ENCODE measurements at regions of chr2 and their contacts with region 1.

Region 1: DNA sequence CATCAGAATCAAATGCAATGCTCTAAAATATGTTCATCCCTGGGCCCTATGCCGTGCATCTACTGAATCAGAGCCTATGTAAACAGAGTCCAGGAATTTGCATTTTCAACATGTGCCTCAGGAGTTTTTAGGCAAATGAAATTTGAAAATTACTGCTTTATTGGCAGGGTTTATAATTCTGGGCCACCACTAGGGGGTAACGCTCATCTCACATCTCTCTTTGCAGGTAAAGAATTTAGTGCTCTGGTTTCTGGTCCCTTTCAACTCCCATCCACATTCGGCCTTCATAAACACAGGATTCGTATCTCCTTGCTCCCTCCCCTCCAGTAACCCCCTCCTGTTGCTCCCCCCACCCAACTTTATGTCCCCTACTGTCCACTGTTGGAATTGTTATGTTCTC is 49.3 kb downstream of the LYPD6B start:
- DNase-seq: no peak
- H3K4me3 ChIP-seq: no peak overlapping the region
- H3K27ac ChIP-seq: no peak overlapping the region
- H3K4me1 ChIP-seq: no peaks in the 10 kb centered on the region
- H3K27me3 ChIP-seq: peaks cover 2% of the 10 kb centered on the region
- CTCF ChIP-seq: peak; percentile 50 to 63

Region 2: GRCh38 chr2:149017116-149017985 is 70.4 kb before region 1 on chr2:
- CTCF ChIA-PET with region 1: no interaction called
- dilution Hi-C with region 1: no loop called
- in situ Hi-C with region 1: no loop called
- intact Hi-C with region 1: no loop called
- DNase-seq: peak; percentile 40
- H3K4me3 ChIP-seq: no peak overlapping the region
- H3K27ac ChIP-seq: no peak overlapping the region
- H3K4me1 ChIP-seq: no peaks in the 10 kb centered on the region
- H3K27me3 ChIP-seq: no peaks in the 10 kb centered on the region
- CTCF ChIP-seq: peak; percentile 87 to 90

Region 3: GRCh38 chr2:149313512-149313972 is 225.8 kb after region 1 on chr2:
- CTCF ChIA-PET with region 1: no interaction called
- dilution Hi-C with region 1: no loop called
- in situ Hi-C with region 1: no loop called
- intact Hi-C with region 1: loop called (anchors 10 kb)
- DNase-seq: peak; percentile 32
- H3K4me3 ChIP-seq: no peak overlapping the region
- H3K27ac ChIP-seq: no peak overlapping the region
- H3K4me1 ChIP-seq: no peaks in the 10 kb centered on the region
- H3K27me3 ChIP-seq: no peaks in the 10 kb centered on the region
- CTCF ChIP-seq: peak; percentile 84 to 90